HAP-1 (cell line): ENCODE measurements at regions of chr6 and their contacts with region 1.

Region 1: DNA sequence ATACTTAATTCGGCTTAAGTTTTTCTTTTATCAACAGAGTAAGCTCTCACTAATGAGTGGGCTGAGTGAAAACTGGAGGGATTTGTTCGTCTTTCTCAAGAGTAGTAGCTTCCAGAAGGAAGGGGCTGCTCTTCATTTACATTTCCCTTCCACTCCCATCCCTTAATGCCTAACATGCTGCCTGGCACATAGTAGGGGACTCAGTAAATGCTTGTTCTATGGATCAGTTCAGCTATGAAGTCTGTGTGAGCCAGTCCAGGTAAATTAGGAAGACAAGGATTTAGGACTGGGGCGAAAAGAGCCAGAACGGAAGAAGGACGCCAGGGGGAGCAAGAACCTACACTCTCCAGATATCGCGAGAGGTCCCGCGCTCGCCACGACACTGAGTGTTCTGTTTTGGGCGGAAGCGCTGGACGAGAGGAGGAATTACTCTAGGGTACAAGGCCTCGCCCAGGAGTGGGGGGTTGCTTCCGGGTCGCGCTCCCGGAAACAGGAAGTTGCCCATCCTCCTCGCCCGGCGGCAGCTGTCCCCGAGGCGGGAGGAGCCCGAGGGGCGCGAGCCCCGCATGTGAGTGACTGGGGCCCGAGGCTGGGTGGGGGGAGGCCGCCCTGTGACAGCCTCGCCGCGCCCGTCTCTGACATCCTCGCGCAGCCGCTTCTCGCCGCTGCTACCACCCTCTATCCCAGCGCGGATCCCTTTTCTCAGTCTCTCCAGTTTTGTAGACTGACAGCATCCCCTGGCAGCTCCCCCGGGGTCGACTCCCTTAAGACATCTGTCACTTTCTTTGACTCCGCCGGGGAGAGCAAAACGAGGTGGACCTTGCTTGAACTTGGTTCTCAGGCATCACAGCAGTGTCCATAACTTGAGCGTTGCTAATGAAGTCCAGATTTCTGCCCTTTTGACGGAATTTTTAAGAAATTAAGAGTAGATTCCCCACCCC is at the start of gene C6orf89:
- DNase-seq: peak; percentile 95 to 99
- H3K4me3 ChIP-seq: peak within 1 kb of the TSS; percentile 81
- H3K4me1 ChIP-seq: peaks cover 13% of the 10 kb centered on the region
- H3K27me3 ChIP-seq: no peaks in the 10 kb centered on the region

Region 2: GRCh38 chr6:37222125-37222967 is 336.6 kb after region 1 on chr6:
- in situ Hi-C with region 1: loop called (anchors 25 kb)
- DNase-seq: peak; percentile 92 to 95
- H3K4me3 ChIP-seq: peak overlapping the region; percentile 61
- H3K4me1 ChIP-seq: peaks cover 6% of the 10 kb centered on the region; the same call in 1 of the 2 replicates
- H3K27me3 ChIP-seq: no peaks in the 10 kb centered on the region